K562 (cell line): ENCODE measurements at regions of chr7 and their contacts with region 1.

Region 1: DNA sequence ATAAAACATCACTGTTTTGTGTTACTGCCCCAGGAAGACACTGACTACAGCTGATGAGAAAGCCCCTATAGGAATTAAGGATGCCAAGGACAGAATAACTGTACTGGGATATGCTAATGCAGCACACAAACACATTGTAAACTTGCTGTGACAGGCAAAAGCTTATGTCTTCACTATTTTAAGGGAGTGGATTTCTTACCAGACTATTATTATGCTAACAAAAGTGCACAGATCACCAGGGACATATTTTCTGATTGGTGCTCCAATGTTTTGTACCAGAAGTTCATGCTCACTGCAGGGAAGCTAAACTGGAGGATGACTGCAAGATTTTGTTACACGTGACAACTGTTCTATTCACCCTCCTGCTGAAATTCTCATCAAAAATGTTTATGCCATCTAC is 48.1 kb upstream of the PTPN12 start:
- DNase-seq: no peak
- ATAC-seq: no peak
- H3K4me3 ChIP-seq: no peak overlapping the region
- H3K27ac ChIP-seq: no peak overlapping the region
- H3K4me1 ChIP-seq: no peaks in the 10 kb centered on the region
- H3K27me3 ChIP-seq: peaks cover 14 to 15% of the 10 kb centered on the region in 2 experiments; a peak in 3 of 5 replicates
- CTCF ChIP-seq: no peak
- EP300 ChIP-seq: no peak
- POLR2A ChIP-seq: no peak
- RAD21 ChIP-seq: no peak

Region 2: GRCh38 chr7:77399816-77400215 is 89.2 kb before region 1 on chr7:
- CTCF ChIA-PET with region 1: no interaction called
- POLR2A ChIA-PET with region 1: no interaction called
- in situ Hi-C with region 1: no loop called
- intact Hi-C with region 1: no loop called
- DNase-seq: no peak
- ATAC-seq: no peak
- H3K4me3 ChIP-seq: no peak overlapping the region
- H3K27ac ChIP-seq: no peak overlapping the region
- H3K4me1 ChIP-seq: no peaks in the 10 kb centered on the region
- H3K27me3 ChIP-seq: peaks cover 2 to 7% of the 10 kb centered on the region in 2 experiments; a peak in 2 of 5 replicates
- CTCF ChIP-seq: no peak
- EP300 ChIP-seq: no peak
- POLR2A ChIP-seq: no peak
- RAD21 ChIP-seq: no peak

Region 3: GRCh38 chr7:77439572-77439971 is 49.4 kb before region 1 on chr7:
- CTCF ChIA-PET with region 1: no interaction called
- POLR2A ChIA-PET with region 1: no interaction called
- in situ Hi-C with region 1: no loop called
- intact Hi-C with region 1: loop called (anchors 5 kb)
- DNase-seq: peak in 1 of 4 experiments; percentile 25
- ATAC-seq: peak; percentile 69
- H3K4me3 ChIP-seq: no peak overlapping the region
- H3K27ac ChIP-seq: no peak overlapping the region
- H3K4me1 ChIP-seq: no peaks in the 10 kb centered on the region
- H3K27me3 ChIP-seq: peaks cover 21 to 26% of the 10 kb centered on the region in 2 experiments; a peak in 4 of 5 replicates
- CTCF ChIP-seq: peak; percentile 17 to 47 (median 45); a peak in 5 of 6 replicates
- EP300 ChIP-seq: no peak
- POLR2A ChIP-seq: no peak
- RAD21 ChIP-seq: peak; percentile 45 to 62

Region 4: GRCh38 chr7:78499971-78500370 is 1011.0 kb after region 1 on chr7:
- CTCF ChIA-PET with region 1: no interaction called
- POLR2A ChIA-PET with region 1: no interaction called
- in situ Hi-C with region 1: no loop called
- intact Hi-C with region 1: no loop called
- DNase-seq: no peak
- ATAC-seq: no peak
- H3K4me3 ChIP-seq: no peak overlapping the region
- H3K27ac ChIP-seq: no peak overlapping the region
- H3K4me1 ChIP-seq: no peaks in the 10 kb centered on the region
- H3K27me3 ChIP-seq: no peaks in the 10 kb centered on the region
- CTCF ChIP-seq: no peak
- EP300 ChIP-seq: no peak
- POLR2A ChIP-seq: no peak
- RAD21 ChIP-seq: no peak